Transverse colon (tissue), 4 donors: ENCODE measurements at regions of chr10 and their contacts with region 1.

Region 1: GRCh38 chr10:125041856-125042506 is 100.1 kb downstream of the ZRANB1 start:
- DNase-seq: no peak
- H3K4me3 ChIP-seq: no peak overlapping the region
- H3K27ac ChIP-seq: no peak overlapping the region
- H3K4me1 ChIP-seq: peaks cover 23 to 48% (median 34%) of the 10 kb centered on the region in 4 donors
- H3K27me3 ChIP-seq: no peaks in the 10 kb centered on the region
- CTCF ChIP-seq: no peak
- EP300 ChIP-seq: no peak
- POLR2A ChIP-seq: no peak

Region 2: GRCh38 chr10:124955243-124955642 is 86.7 kb before region 1 on chr10:
- in situ Hi-C with region 1: no loop called
- intact Hi-C with region 1: no loop called
- DNase-seq: no peak
- H3K4me3 ChIP-seq: no peak overlapping the region
- H3K27ac ChIP-seq: peak overlapping the region in 1 of 4 donors; percentile 11
- H3K4me1 ChIP-seq: peaks cover 0 to 34% (median 9%) of the 10 kb centered on the region in 4 donors
- H3K27me3 ChIP-seq: no peaks in the 10 kb centered on the region
- CTCF ChIP-seq: no peak
- EP300 ChIP-seq: no peak
- POLR2A ChIP-seq: no peak

Region 3: DNA sequence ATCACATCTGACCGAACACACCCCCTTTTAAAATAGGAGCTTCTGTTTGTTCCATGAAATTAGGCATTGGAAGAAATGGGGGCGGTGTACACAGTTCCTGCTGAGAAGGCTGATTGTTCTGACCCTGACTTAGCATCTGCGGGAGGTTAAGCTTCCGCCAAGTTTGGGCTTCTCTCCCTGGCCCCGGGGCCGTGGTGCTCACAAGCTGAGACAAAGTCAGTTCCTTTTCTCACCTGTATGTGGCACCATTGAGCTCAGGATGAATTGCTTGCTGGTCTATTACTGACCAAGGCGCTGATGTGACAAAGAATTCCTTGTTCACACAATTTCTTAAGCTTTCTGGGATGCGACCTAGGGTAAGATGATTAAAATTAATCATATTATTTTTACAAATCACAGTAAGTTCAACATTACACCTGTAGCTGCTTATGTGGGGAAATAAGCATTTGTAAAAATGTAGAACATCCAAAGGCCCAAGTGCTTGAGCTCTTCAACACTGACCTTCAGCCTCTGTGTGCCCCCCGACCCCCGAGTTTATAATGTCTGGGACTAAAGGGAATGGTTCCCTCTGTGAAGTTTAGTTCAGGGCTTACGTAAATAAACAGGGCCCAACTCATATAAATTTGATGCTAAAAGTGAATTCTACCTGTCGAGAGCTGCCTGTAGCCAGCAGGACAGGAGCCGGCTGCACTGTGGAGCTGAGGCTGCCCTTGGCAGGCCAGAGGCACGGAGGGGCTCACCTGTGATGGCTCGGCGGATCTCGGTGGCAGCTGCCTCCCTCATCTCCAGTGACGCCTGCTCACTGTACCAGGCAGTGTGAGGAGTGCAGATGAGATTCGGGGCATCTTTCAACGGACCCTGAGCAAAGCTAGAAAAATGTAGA is 49.3 kb before region 1 on chr10:
- in situ Hi-C with region 1: no loop called
- intact Hi-C with region 1: loop called (anchors 1 kb)
- DNase-seq: peak; percentile 54
- H3K4me3 ChIP-seq: no peak overlapping the region
- H3K27ac ChIP-seq: peak overlapping the region in 2 of 4 donors; percentile 7 to 38
- H3K4me1 ChIP-seq: no peaks in the 10 kb centered on the region
- H3K27me3 ChIP-seq: no peaks in the 10 kb centered on the region
- CTCF ChIP-seq: peak; percentile 67 to 84 (median 74)
- EP300 ChIP-seq: no peak
- POLR2A ChIP-seq: no peak

Region 4: DNA sequence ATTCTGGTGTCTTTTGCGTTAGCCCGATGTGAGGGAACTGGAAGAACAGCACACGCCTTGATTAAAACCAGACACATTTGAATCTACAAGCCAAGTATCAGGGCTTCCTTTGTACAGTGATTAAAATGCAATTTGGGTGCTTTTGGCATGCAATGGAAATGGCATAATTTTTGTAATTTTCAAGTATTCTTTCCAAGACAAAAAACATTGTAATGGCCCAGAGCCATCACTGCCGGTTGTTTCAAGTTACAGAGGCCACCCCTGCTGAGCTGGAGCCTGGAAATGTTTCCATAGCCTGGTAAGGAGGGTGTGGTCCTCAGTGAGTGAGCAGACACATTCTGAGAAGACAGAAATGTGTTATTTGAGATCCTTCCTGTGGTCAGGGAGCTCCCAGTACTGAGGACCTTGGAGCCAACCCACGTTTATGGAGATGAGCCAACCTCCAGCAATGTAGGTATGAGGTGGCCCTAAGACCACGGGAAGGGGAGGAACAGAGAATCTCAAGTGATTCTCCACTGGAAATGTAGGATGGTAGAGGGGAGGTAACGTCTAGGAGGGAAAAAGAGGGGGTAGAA is 620.0 kb after region 1 on chr10:
- in situ Hi-C with region 1: no loop called
- intact Hi-C with region 1: no loop called
- DNase-seq: no peak
- H3K4me3 ChIP-seq: no peak overlapping the region
- H3K27ac ChIP-seq: no peak overlapping the region
- H3K4me1 ChIP-seq: no peaks in the 10 kb centered on the region
- H3K27me3 ChIP-seq: no peaks in the 10 kb centered on the region
- CTCF ChIP-seq: no peak
- EP300 ChIP-seq: no peak
- POLR2A ChIP-seq: no peak